Activated CD8-positive, alpha-beta T cell treated with anti-CD3 and anti-CD28 coated beads, Interleukin-2, amount 10 ng/mL, durations not matched to agents 7 days and 5 days (primary cell): ENCODE measurements at regions of chr18 and their contacts with region 1.

Region 1: GRCh38 chr18:5295981-5296705 is 617 bp upstream of the ZBTB14 start:
- DNase-seq: peak; percentile 94
- ATAC-seq: peak; percentile 79
- H3K4me3 Mint-ChIP-seq: peak overlapping the region; percentile 83
- H3K27ac Mint-ChIP-seq: peak overlapping the region; percentile 93
- H3K4me1 Mint-ChIP-seq: peaks cover 24% of the 10 kb centered on the region
- H3K27me3 Mint-ChIP-seq: peaks cover 15% of the 10 kb centered on the region

Region 2: GRCh38 chr18:5132987-5133386 is 163.2 kb before region 1 on chr18:
- CTCF ChIA-PET with region 1: no interaction called
- POLR2A ChIA-PET with region 1: no interaction called
- DNase-seq: no peak
- ATAC-seq: no peak
- H3K4me3 Mint-ChIP-seq: no peak overlapping the region
- H3K27ac Mint-ChIP-seq: no peak overlapping the region
- H3K4me1 Mint-ChIP-seq: no peaks in the 10 kb centered on the region
- H3K27me3 Mint-ChIP-seq: no peaks in the 10 kb centered on the region

Region 3: DNA sequence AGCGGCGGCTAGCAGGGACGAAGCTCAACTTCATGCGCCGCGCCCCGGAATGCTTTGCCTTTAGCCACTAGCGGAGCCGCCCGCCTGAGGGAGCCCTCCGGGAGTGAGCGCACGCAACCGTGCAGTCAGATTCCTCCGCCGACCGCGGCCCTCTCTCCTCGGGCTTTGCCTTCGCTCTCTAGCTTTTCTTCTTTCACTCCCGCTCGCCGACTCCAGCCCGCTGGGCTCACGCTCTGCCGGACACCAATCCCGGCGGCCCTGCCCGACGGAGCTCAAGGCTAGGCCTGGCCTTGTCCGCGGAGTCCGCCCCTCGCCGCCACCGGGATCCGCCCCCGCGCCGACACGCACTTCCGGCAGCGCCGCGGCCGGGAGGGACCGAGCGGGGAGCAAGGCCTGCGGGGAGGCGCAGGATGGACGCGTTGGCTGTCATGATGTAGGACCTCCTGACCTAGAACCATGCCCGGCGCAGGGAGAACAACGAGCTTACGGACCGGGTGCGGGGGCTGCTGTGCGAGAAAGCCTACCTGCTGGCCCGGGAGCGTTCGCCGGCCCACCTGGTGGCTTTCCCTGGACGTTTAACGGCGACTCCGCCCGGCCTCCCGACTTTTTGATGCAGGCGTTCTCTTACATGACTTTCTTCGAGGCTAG is 58.3 kb before region 1 on chr18:
- CTCF ChIA-PET with region 1: interaction called, 40 read pairs
- POLR2A ChIA-PET with region 1: interaction called, 176 read pairs
- DNase-seq: peak; percentile 88
- ATAC-seq: peak; percentile 93
- H3K4me3 Mint-ChIP-seq: peak overlapping the region; percentile 93
- H3K27ac Mint-ChIP-seq: peak overlapping the region; percentile 99
- H3K4me1 Mint-ChIP-seq: peaks cover 36% of the 10 kb centered on the region
- H3K27me3 Mint-ChIP-seq: no peaks in the 10 kb centered on the region

Region 4: GRCh38 chr18:5282770-5283169 is 13.4 kb before region 1 on chr18:
- CTCF ChIA-PET with region 1: no interaction called
- POLR2A ChIA-PET with region 1: interaction called, 10 read pairs
- DNase-seq: no peak
- ATAC-seq: no peak
- H3K4me3 Mint-ChIP-seq: no peak overlapping the region
- H3K27ac Mint-ChIP-seq: no peak overlapping the region
- H3K4me1 Mint-ChIP-seq: peaks cover 9% of the 10 kb centered on the region
- H3K27me3 Mint-ChIP-seq: no peaks in the 10 kb centered on the region

Region 5: DNA sequence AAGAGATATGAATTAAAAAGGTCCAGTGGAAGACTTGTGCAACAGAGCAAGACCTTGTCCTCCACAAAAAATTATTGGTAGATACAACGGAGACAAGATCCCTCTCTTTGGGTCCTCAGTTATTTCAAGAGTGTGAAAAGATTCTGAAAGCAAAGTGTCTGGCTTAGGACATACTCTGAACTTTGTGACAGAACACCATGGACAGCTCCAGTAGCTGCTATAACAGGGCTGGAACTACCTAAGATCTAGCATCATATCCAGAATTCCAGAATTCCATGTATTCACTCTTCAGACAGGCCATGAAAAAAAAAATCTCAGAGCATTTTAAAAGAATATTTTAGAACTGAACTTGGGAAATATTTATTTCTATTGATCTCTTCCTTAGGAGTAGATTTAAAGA is 74.2 kb after region 1 on chr18:
- CTCF ChIA-PET with region 1: no interaction called
- POLR2A ChIA-PET with region 1: no interaction called
- DNase-seq: no peak
- ATAC-seq: no peak
- H3K4me3 Mint-ChIP-seq: no peak overlapping the region
- H3K27ac Mint-ChIP-seq: no peak overlapping the region
- H3K4me1 Mint-ChIP-seq: no peaks in the 10 kb centered on the region
- H3K27me3 Mint-ChIP-seq: no peaks in the 10 kb centered on the region